Dendritic cell treated with granulocyte-macrophage colony-stimulating factor and Interleukin-4, amounts not matched to agents 40 ng/mL and 50 ng/mL, for 4 days (primary cell): ENCODE measurements at regions of chr18 and their contacts with region 1.

Region 1: GRCh38 chr18:44895176-44895798 is 214.6 kb downstream of the SETBP1 start:
- H3K4me3 Mint-ChIP-seq: no peak overlapping the region
- H3K27ac Mint-ChIP-seq: no peak overlapping the region
- H3K4me1 Mint-ChIP-seq: peaks cover 8% of the 10 kb centered on the region
- H3K27me3 Mint-ChIP-seq: peaks cover 14% of the 10 kb centered on the region

Region 2: GRCh38 chr18:43620936-43621335 is 1274.4 kb before region 1 on chr18:
- intact Hi-C with region 1: loop called (anchors 10 kb)
- H3K4me3 Mint-ChIP-seq: no peak overlapping the region
- H3K27ac Mint-ChIP-seq: no peak overlapping the region
- H3K4me1 Mint-ChIP-seq: no peaks in the 10 kb centered on the region
- H3K27me3 Mint-ChIP-seq: no peaks in the 10 kb centered on the region

Region 3: GRCh38 chr18:44098551-44099098 is 796.7 kb before region 1 on chr18:
- intact Hi-C with region 1: loop called (anchors 10 kb)
- H3K4me3 Mint-ChIP-seq: no peak overlapping the region
- H3K27ac Mint-ChIP-seq: no peak overlapping the region
- H3K4me1 Mint-ChIP-seq: no peaks in the 10 kb centered on the region
- H3K27me3 Mint-ChIP-seq: no peaks in the 10 kb centered on the region

Region 4: DNA sequence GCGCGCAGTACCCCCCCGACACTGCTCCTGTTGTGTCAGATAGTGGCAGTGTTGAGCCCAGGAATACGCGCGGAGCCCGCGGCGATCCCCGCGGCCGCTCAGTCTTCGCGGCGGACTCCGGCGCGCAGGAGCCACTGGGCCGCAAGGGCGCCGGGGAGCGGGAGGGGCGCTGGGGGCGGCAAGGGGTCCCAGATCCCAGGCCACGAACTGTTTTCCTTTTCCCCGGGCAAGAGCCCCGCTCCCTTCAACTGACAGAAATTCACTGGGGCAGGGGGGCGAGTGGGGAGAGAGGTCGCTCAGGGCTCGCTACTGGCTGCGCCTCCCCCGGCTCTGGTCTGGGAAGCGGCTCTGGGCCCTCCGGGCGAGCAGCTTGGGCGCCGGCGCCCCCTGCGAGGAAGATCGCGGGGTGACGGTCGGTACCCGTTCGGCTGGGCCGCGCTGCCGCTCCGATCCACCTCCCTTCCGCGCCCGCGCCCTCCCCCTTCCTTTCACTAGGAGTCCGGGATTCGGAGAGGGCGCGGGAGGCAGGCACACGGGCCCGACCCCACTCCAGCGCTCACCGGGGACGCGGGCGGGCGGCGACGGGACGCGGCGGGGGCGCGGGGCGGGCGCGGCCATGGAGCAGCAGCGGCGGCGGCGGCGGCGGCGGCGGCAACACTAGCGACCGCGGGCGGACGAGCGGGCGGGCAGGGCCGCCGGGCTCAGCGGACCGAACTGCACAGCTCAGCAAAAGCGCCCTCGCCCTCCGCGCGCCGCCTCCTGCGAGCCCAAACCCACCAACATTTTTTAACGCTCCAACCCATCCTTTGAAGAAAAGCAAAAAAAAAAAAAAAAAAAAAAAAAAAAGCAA is 216.0 kb before region 1 on chr18:
- intact Hi-C with region 1: loop called (anchors 2 kb)
- H3K4me3 Mint-ChIP-seq: peak overlapping the region; percentile 76
- H3K27ac Mint-ChIP-seq: peak overlapping the region; percentile 52
- H3K4me1 Mint-ChIP-seq: no peaks in the 10 kb centered on the region
- H3K27me3 Mint-ChIP-seq: peaks cover 23% of the 10 kb centered on the region

Region 5: DNA sequence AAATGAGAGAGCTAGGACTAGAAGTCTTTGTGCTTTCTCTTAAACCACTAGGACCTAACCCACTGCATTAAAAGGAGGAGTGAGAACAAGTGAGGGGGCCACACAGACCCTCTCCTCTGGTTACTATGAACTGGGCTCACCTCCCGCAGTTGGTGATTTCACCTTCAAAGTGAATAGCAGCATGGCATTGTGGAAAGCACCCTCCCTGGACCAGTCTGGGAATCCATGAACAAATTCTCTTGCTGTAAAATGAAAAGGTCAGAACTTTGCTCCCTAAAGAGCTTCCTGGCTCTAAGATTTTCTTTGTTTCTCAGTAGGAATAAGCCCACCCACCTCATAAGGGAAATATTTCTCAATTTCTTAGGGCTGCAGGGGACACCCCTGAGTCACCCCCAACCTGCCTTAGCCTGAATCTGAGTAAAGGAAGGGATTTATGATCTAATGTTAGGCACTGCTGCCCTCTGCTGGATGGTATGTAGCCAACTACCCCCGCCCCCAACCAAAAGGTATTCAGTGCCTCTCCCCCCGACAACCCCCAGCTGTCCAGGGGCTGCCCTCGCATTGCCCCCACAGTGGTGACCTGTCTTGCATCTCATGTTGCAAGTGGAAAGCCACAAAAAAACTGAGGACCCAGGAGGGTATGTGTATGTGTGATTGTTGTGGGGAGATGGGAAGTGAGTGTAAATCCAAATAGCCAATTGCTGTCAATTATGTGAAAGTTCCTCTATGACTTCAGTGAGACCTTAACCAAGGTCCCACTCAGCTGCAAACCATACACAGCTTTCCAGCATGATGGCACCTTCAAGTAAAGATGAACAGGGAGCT is 489.1 kb after region 1 on chr18:
- intact Hi-C with region 1: loop called (anchors 5 kb)
- H3K4me3 Mint-ChIP-seq: no peak overlapping the region
- H3K27ac Mint-ChIP-seq: no peak overlapping the region
- H3K4me1 Mint-ChIP-seq: peaks cover 4% of the 10 kb centered on the region
- H3K27me3 Mint-ChIP-seq: peaks cover 18% of the 10 kb centered on the region